A549 (cell line): ENCODE measurements at regions of chr9 and their contacts with region 1.

Region 1: DNA sequence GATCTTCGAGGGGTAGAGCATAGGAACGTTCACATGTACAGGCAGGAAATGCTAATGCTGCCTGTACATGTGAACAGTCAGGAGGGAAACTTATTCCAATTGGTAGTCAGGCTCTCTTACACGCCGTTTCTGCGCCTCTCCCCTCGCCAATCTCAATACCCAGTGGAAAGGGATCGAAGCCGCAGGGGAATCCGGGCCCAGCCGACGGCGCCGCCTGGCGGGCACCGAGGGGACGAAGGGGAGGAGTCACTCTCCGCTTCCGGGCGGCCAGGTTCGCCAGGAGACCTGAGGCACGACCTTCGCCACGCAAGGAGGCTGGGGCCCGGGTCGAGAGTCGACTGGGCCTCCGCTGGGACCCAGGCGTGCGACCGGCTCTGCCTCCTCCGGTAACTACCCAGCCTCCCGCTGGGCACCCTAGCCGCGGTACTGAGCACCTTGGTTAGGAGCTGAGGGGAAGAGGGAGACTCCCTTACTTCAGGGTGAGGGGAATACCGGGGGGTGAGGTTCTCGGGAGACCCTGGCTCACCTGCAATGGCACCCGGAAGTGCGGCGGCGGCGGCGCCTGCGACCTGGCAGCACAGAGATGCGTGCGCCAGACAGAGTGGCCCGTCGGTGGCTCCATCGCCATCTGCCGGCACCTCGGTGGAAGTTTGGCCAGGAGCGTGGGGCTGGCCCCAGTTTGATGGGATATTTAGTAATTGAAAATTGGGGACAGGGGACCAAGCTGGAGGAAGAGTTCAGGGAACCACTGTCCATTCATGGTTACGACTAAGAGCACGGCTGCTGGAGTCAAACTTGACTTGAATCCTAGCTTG is at the start of gene PIGO:
- DNase-seq: peak; percentile 89 to 94
- ATAC-seq: peak; percentile 95 to 96
- H3K4me3 ChIP-seq: peak within 1 kb of the TSS; percentile 66
- H3K27ac ChIP-seq: peak within 1 kb of the TSS; percentile 94
- H3K4me1 ChIP-seq: peaks cover 12% of the 10 kb centered on the region
- CTCF ChIP-seq: peak; percentile 82
- EP300 ChIP-seq: no peak
- POLR2A ChIP-seq: peak; percentile 71
- RAD21 ChIP-seq: peak; percentile 49 to 58
- polyA plus RNA-seq, gene PIGO: 50.4 and 60.0 TPM in 2 replicates

Region 2: DNA sequence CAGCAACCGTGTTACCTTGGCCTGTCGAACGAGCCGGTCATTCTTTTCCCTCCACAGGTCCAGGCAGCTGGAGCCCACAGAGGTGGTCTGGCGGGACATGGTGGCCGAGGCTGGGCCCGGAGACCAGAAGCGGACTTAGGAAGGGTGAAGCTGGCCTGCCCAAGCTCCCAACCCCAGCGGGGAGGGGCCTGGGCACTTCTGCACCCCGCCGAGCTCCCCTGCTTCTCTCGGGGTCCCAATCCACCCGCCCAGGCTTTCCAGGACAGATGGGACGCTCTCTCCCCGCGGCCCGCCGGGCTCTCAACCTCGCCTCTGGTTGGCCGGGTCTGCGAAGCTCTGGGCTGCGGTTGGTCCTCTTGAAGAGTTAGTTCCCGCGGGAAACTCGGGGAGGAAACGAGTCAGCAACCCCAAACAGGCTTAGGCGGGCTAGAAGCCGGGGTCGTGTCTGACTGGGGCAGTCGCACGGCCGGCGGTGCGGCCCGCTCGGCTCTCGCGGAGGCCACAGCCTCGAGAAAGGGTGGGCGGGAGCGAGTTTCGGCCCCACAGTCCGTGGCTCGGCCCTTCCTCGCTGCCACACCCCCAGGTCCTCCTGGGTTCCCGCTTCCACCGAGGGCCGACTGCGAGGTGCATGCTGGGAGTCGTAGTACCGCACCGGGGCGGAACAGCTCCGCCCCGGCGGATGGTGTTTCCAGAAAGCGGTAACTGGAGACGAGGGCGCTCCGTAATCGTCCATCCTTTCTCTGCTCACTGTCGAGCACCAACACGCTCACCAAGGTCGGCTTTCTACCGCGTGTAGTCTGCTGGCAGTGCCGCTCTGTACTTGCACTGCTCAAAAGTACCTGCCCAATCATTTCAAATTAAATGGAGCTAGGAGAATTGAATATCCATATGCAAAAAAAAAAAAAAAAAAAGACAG is 16.6 kb before region 1 on chr9 and contains the start of gene FANCG:
- CTCF ChIA-PET with region 1: interaction called, 99 read pairs
- POLR2A ChIA-PET with region 1: interaction called, 63 read pairs
- DNase-seq: peak; percentile 94 to 95
- ATAC-seq: peak; percentile 96
- H3K4me3 ChIP-seq: peak within 1 kb of the TSS; percentile 71
- H3K27ac ChIP-seq: peak within 1 kb of the TSS; percentile 86 to 96
- H3K4me1 ChIP-seq: peaks cover 14% of the 10 kb centered on the region; the same call in 2 of the 3 replicates
- CTCF ChIP-seq: no peak
- EP300 ChIP-seq: no peak
- POLR2A ChIP-seq: peak; percentile 88
- RAD21 ChIP-seq: no peak
- polyA plus RNA-seq, gene FANCG: 34.9 and 39.7 TPM in 2 replicates

Region 3: DNA sequence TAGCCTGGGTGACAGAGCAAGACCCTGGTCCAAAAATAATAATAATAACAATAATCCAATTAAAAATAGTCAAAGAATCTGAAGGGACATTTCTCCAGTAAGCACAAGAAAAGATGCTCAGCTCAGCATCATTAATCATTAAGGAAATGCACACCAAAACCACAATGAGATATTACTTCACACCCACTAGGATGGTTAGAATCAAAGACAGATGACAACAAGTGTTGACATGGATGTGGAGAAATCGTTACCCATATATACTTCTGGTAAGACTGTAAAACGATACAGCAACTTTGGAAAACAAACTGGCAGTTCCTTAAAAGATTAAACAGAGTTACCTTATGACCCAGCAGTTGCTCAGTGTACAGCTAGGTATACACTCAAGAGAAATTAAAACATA is 11.2 kb before region 1 on chr9:
- CTCF ChIA-PET with region 1: interaction called, 99 read pairs
- POLR2A ChIA-PET with region 1: interaction called, 63 read pairs
- DNase-seq: no peak
- ATAC-seq: no peak
- H3K4me3 ChIP-seq: no peak overlapping the region
- H3K27ac ChIP-seq: no peak overlapping the region
- H3K4me1 ChIP-seq: 0 out of 3 replicates have a peak, but pooled peaks cover 5% of the 10 kb centered on the region
- CTCF ChIP-seq: no peak
- EP300 ChIP-seq: no peak
- POLR2A ChIP-seq: no peak
- RAD21 ChIP-seq: no peak